Tibial artery (tissue), 4 donors: ENCODE measurements at regions of chr15 and their contacts with region 1.

Region 1: DNA sequence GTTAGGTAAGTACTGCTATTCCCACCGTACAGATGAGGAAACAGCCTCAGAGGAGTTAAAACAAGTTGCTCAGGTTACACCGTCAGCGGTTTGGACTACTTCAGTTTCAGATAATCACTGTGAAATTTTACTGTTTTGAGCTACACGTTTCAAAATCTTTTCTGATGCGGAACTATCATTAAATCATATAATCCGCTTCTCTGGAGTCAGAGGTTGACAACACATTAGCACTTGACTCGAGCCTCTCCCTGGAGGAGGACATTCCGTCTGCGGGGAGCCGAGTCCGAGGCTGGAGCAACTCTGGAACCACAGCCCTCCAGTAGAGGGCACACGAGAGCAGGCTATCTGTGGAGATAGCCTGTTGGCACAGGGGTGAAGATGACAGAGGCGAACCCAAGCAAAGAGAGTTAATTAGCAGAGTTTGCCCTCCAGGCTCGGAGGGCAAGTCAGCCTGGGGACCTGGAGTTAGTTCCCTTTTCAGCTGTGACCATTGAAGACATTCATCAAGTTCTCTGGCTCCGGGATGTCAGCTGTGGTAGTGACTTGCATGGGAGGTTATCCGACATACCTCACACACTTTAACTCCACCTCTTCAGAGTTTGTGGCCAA is 131.2 kb downstream of the IGF1R start:
- DNase-seq: peak; percentile 58 to 83
- H3K4me3 ChIP-seq: no peak overlapping the region
- H3K27ac ChIP-seq: peak overlapping the region; percentile 8 to 31
- H3K4me1 ChIP-seq: peaks cover 0 to 70% (median 32%) of the 10 kb centered on the region in 4 donors
- H3K27me3 ChIP-seq: no peaks in the 10 kb centered on the region
- CTCF ChIP-seq: peak; percentile 79 to 88

Region 2: GRCh38 chr15:98668566-98669308 is 110.8 kb before region 1 on chr15:
- intact Hi-C with region 1: loop called (anchors 10 kb)
- DNase-seq: no peak
- H3K4me3 ChIP-seq: no peak overlapping the region
- H3K27ac ChIP-seq: peak overlapping the region; percentile 61 to 62
- H3K4me1 ChIP-seq: peaks cover 5 to 98% (median 67%) of the 10 kb centered on the region in 4 donors
- H3K27me3 ChIP-seq: no peaks in the 10 kb centered on the region
- CTCF ChIP-seq: no peak

Region 3: DNA sequence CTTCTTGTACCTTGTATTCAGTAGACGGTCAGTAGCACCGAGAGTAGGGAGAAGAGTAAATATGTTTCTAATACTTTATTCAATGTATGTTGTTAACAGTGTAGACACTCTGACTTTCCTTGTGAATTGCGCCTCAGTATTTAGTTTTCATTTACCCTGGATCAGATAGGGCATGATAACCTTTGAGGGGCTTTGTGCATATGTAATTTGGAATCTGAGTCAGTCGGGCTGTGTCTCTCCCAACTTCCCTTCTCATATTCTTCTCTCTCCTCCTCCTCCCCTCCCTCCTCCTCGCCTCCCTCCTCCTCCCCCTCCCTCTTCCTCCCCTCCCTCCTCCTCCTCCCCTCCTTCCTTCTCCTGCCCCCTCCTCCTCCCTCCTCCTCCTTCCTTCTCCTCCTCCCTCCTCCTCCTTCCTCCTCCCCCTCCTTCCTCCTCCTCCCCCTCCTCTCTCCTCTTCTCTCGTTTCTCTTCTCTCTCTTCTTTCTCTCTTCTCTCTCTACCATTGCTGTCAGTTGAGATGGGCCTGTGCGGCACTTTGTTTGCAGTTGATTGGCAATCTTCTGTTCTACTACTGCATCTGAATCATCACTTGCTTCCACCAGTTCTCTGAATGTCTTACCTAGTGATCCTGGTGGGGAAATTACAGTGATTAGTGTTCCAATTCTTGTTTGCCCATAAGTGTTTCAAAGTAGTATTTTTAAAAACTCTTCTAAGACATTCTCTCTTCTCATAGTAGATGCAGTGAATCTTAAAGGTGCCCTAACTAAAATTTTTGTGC is 65.7 kb after region 1 on chr15:
- intact Hi-C with region 1: loop called (anchors 10 kb)
- DNase-seq: no peak
- H3K4me3 ChIP-seq: no peak overlapping the region
- H3K27ac ChIP-seq: no peak overlapping the region
- H3K4me1 ChIP-seq: peaks cover 0 to 94% (median 28%) of the 10 kb centered on the region in 4 donors
- H3K27me3 ChIP-seq: no peaks in the 10 kb centered on the region
- CTCF ChIP-seq: no peak

Region 4: DNA sequence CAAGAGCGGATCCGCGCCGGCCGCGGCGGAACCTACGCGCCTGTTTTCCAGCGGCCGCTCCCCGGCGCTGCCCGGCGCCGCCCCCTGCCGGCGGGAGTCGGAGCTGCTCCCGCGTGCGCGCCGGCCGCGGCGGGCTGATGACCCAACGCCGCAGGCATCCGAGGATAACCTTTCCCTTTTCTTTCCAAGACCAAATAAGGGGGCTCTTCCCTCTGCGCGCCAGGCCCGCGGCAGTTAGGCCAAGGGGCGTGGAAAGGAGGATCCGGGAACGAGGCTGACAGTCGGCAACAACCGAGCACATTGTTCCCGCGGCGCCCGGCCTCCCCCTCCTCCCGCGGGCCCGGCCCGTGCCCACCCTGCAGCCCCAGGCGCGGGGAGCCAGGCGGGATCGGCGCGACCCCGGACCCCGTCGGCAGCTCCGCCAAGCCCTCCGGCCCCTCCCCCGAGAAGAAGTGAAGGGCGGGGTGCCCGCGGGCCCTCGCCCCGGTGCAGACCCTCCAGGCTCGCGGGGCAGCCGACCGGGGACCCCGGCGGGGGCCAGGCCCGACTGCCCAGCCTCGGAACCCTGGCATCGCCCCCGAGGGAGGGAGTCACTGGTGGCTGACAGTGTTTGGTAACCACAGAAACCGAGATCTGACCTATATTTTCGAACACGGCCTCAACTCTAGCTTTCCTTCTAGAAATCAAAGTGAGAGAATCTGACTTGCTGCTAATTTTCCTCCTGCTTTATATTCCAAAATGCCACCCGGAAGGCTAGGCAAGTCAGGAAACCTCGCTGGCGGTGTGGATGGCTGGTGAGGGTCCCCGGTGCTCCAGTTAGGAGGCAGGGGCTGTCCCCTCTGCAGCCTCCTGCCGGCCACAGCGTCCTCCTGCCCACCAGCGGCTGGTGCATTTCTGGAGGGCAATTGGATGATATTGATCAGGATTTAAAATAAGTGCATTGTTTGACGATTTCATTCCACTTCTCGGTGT is 279.7 kb after region 1 on chr15:
- intact Hi-C with region 1: loop called (anchors 5 kb)
- DNase-seq: peak; percentile 73 to 94
- H3K4me3 ChIP-seq: peak overlapping the region; percentile 61 to 75
- H3K27ac ChIP-seq: peak overlapping the region; percentile 92 to 93
- H3K4me1 ChIP-seq: peaks cover 0 to 19% (median 7%) of the 10 kb centered on the region in 4 donors
- H3K27me3 ChIP-seq: no peaks in the 10 kb centered on the region
- CTCF ChIP-seq: peak; percentile 73 to 90

Region 5: DNA sequence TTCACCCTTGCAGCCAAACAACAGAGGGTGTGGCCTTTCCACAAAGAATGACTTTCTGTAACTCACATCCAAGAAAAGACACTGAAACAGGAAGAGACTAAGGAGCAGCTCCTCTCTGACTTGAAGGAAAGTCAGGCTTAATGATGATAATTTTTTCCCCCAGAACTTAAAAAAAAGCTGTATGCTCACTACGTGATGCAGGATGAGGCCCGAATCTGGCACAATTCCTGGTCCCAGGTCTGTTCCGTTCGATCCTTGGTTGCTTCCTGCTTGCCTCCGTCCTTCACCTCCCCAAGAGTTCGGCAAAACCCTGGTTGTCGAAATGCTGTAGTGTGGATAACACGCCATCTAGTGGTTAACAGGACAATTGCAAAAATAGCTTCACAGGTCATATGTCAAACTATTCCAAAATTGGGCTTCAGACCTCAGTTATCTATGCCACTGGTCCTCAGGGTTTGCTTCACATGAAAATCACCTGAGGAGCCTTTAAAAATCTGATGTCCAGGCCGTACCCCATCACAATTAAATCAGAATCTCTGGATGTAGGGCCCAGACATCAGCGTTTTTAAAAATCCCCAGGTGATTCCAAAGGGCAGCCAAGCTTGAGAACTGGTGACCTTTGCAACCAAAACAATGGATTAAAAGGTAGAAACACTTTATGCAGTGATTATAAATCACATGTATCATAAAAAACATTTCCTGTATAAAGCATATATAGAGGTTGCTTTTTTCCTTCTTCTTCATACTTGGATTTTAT is 297.2 kb after region 1 on chr15:
- intact Hi-C with region 1: loop called (anchors 2 kb)
- DNase-seq: peak; percentile 52 to 73
- H3K4me3 ChIP-seq: peak overlapping the region; percentile 36 to 43
- H3K27ac ChIP-seq: peak overlapping the region; percentile 14 to 59
- H3K4me1 ChIP-seq: no peaks in the 10 kb centered on the region
- H3K27me3 ChIP-seq: no peaks in the 10 kb centered on the region
- CTCF ChIP-seq: peak; percentile 79 to 90